ENCODE measurements at regions of chr1 and their contacts with region 1.

Region 1: DNA sequence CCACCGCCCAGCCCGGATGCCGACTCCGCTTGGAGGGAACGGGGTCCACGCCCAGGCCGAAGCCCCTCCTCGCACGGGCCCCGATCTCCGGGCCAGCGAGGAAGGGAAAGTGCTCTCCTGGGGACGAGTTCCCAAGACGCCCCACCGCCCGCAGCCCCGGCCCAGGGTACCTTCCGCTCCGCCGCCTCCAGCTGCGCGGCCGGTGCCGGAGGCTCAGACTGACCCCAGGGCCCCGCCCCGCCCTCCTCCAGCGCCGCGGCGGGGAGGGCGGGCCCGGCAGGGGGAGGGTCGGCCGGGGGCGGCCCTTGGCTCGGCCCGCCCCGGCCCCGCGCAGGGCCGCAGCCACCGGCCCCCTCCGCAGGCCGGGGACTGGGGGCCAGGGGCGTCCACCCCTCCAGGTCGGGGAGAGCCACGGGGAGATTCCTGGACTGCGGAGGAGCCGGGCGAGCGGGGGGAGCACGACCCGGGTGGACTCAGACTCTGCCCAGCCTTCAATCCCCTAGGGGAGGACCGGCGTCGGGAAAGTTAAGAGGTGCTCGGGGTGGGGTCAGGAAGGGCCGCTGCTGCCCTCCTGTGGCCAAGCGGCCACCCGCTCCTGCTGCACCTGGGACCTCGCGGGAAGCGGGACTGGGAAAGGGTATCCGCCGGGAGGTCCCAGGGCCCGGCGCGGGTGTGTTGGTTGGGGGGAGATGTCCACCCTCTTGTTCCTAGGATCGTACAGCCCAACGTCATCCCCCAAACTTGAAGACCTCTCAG is at the start of gene RHOC:
- DNase-seq: peak; percentile 93
- total RNA-seq, gene RHOC: 270 TPM

Region 2: DNA sequence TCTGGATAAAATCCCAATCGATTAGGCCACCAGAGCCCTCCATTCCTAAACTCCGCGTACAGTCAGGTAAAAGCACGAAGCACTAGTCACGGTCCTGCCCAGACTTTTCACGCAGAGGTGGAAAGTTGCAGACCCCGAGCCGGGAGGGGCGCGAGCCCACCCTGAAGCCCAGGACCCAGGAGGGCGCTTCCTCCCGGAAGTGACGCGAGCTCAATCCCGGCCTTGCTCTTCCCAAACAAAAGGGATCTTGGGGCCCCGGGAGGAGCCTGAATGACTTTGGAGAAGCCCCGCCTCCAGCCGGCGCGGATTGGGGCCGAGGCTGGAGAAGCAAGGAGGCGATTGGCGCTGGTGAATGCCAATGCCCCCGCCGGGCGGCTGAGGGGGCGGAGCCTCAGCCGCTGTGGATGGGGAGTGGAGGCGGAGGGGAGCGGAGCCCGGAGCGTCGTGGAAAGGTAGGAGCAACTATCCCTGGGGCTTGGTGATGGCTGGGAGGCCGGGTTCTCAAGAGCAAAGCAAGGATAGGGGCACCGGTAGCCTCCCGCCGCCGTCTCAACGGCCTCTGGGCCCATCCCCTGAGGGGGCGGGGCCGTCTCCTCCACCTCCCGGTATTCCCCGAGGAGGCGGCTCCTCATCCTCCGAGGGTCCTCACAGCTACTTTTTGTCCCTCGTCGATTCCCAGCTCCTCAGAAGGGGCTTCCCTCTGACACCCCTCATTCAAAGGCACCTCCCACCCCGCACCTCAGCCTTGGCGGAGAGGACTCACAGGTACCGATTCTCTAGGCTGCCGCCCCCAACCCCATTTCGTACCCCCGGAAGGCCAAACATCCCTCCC is 311.0 kb before region 1 on chr1 and contains the start of gene CTTNBP2NL:
- intact Hi-C with region 1: loop called (anchors 2 kb)
- DNase-seq: peak; percentile 98
- total RNA-seq, gene CTTNBP2NL: 19.1 TPM

Region 3: DNA sequence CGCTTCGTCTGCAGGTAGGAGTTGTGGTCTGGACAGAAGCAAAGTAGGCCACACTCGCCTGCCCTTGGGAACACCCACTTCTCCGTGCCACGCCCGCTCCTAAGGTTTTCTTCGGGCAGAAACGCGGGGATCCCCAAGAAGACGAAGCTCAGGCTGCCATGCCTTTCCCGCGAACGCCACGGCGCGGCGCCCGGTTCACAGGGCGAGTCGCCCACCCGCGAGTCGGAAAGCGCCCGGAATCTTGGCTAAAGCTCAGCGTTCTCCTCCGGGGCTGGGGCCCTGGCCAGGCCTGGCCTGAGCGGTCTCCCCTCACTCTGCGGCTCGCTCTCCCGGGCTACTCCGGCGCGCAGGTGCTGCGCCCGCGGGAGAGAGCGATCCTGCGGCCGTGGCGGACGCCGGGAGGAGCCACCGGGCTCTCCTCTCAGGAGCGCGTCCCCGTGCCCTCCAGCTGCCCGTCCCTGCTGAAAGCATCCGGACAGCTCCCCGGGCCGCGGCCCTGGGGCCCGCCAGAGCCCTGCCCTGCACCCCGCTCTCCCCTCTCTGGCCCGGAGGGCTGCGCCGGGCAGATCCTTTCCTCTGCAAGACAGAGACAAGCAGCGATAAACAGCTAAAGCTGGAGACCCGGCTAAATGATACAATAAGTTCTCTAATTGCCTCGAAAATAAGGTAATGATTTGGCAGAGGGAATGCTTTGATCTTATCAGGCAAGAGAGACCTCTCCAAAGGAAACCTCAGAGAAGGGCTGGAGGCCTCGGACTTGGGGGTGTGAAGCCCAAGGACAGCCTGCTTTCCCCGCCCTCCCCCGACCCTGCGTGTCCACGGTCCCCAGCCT is 205.1 kb before region 1 on chr1:
- intact Hi-C with region 1: loop called (anchors 2 kb)
- DNase-seq: peak; percentile 84

Region 4: DNA sequence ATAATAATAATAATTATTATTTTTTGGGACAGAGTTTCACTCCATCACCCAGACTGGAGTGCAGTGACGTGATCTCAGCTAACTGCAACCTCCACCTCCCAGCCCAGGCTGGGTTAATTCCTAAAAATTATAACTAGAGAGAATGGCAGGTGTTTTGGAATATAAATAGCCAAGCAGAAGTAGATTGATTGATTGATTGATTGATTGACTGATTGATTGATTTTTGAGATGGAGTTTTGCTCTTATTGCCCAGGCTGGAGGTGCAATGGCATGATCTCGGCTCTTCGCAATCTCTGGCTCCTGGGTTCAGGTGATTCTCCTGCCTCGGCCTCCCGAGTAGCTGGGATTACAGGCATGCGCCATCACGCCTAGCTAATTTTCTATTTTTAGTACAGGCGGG is 47.0 kb before region 1 on chr1:
- intact Hi-C with region 1: no loop called
- DNase-seq: no peak

Region 5: GRCh38 chr1:112674439-112674985 is 32.6 kb before region 1 on chr1 and contains the start of gene MOV10:
- intact Hi-C with region 1: loop called (anchors 2 kb)
- DNase-seq: peak; percentile 87
- total RNA-seq, gene MOV10: 18.3 TPM